Activated CD4-positive, alpha-beta memory T cell treated with anti-CD3 and anti-CD28 coated beads, Interleukin-2, amount 10 ng/mL, durations not matched to agents 7 days and 5 days (primary cell): ENCODE measurements at regions of chr20 and their contacts with region 1.

Region 1: GRCh38 chr20:2651772-2652723 is at the start of gene NOP56:
- DNase-seq: peak; percentile 94
- H3K4me3 Mint-ChIP-seq: peak within 1 kb of the TSS; percentile 84
- H3K27ac Mint-ChIP-seq: peak within 1 kb of the TSS; percentile 87
- H3K4me1 Mint-ChIP-seq: peaks cover 50% of the 10 kb centered on the region
- H3K27me3 Mint-ChIP-seq: no peaks in the 10 kb centered on the region
- total RNA-seq, gene NOP56: 285 to 302 TPM

Region 2: DNA sequence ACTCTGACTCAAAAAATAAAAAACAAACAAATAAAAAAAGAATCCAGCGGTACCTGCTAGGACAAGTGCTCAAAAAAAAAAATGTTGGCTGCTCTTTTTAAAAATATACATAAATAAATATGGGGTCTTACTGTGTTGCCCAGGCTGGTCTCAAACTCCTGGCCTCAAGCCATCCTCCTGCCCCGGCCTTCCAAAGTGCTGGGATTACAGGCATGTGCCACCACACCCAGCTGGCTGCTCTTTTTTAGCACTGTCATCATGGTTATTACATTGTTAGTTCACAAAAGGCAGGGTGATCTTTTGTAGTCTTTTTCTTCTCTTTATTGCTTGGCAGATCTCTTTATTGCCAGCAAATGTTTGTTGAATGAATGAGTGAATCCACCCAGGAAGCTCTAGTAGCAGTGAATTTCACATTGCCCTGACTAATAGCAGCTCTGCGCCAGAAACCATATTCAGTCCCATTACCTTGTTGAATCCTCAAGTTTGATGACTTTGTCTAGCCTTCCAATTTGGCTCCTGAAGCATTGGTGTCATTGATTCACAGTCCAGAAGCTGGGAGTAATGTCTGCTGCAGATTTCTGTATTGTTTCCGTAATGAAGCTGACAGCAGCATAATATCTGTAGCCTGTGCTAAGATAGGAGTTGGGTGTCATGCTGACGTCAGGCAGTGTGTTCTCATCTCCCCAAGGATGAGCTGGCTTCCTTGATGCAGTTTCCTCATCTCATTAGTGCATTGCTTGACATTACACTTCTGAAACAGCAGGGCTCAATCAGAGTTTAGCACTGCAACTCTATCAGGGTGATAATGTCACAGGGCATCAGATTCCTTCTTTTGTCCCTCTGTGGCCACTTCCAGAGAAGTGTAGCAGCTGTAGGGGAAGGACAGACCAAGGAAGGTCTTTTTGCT is 441.1 kb before region 1 on chr20:
- CTCF ChIA-PET with region 1: no interaction called
- POLR2A ChIA-PET with region 1: no interaction called
- DNase-seq: no peak
- H3K4me3 Mint-ChIP-seq: no peak overlapping the region
- H3K27ac Mint-ChIP-seq: no peak overlapping the region
- H3K4me1 Mint-ChIP-seq: peaks cover 1% of the 10 kb centered on the region
- H3K27me3 Mint-ChIP-seq: peaks cover 21% of the 10 kb centered on the region

Region 3: DNA sequence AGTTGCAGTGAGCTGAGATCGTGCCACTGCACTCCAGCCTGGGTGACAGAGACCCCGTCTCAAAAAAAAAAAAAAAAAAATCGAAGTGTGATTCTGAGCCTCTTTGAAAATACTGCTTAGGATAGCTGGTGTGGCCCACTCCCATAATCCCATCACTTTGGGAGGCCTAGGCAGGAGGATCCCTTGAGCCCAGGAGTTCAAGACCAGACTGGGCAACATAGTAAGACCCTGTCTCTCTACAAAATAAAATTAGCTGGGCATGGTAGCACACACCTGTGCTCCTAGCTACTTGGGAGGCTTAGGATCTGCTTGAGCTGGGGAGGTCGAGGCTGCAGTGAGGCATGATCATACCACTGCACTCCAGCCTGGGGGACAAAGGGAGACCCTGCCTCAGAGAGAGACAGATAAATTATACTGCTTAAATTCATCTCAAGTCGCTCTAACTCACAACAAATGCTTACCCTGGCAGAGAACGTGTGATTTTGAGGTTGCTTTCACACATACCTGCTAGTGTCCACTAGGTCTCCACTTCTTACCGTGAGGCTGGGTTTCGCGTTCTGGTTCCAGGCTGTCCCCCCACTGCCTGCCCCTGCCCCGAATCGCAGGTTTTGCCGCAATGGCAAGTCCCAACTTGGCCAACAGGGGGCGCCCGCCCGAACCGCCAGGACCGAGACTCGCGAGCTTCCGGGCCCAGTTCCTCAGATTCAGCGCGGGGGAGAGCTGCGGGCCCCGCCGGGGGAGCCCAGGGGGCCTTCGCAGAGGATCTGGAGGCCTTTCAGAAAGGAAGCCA is 127.9 kb before region 1 on chr20:
- CTCF ChIA-PET with region 1: interaction called, 15 read pairs
- POLR2A ChIA-PET with region 1: interaction called, 20 read pairs
- DNase-seq: peak; percentile 91
- H3K4me3 Mint-ChIP-seq: peak overlapping the region; percentile 88
- H3K27ac Mint-ChIP-seq: peak overlapping the region; percentile 71
- H3K4me1 Mint-ChIP-seq: peaks cover 33% of the 10 kb centered on the region
- H3K27me3 Mint-ChIP-seq: peaks cover 3% of the 10 kb centered on the region

Region 4: GRCh38 chr20:2663887-2664719 is 12.1 kb after region 1 on chr20 and contains the start of gene IDH3B:
- CTCF ChIA-PET with region 1: interaction called, 18 read pairs
- POLR2A ChIA-PET with region 1: interaction called, 199 read pairs
- DNase-seq: peak; percentile 95
- H3K4me3 Mint-ChIP-seq: peak within 1 kb of the TSS; percentile 84
- H3K27ac Mint-ChIP-seq: peak within 1 kb of the TSS; percentile 95
- H3K4me1 Mint-ChIP-seq: peaks cover 34% of the 10 kb centered on the region
- H3K27me3 Mint-ChIP-seq: peaks cover 8% of the 10 kb centered on the region
- total RNA-seq, gene IDH3B: 78.8 to 82.2 TPM

Region 5: GRCh38 chr20:2742934-2743559 is 91.0 kb after region 1 on chr20:
- CTCF ChIA-PET with region 1: no interaction called
- POLR2A ChIA-PET with region 1: interaction called, 15 read pairs
- DNase-seq: peak; percentile 71
- H3K4me3 Mint-ChIP-seq: no peak overlapping the region
- H3K27ac Mint-ChIP-seq: no peak overlapping the region
- H3K4me1 Mint-ChIP-seq: peaks cover 33% of the 10 kb centered on the region
- H3K27me3 Mint-ChIP-seq: peaks cover 20% of the 10 kb centered on the region

Region 6: GRCh38 chr20:2780948-2781347 is 128.9 kb after region 1 on chr20:
- CTCF ChIA-PET with region 1: no interaction called
- POLR2A ChIA-PET with region 1: no interaction called
- DNase-seq: no peak
- H3K4me3 Mint-ChIP-seq: no peak overlapping the region
- H3K27ac Mint-ChIP-seq: no peak overlapping the region
- H3K4me1 Mint-ChIP-seq: no peaks in the 10 kb centered on the region
- H3K27me3 Mint-ChIP-seq: peaks cover 26% of the 10 kb centered on the region

Region 7: GRCh38 chr20:2814587-2815051 is 162.6 kb after region 1 on chr20 and contains the start of gene C20orf141:
- CTCF ChIA-PET with region 1: no interaction called
- POLR2A ChIA-PET with region 1: no interaction called
- DNase-seq: no peak
- H3K4me3 Mint-ChIP-seq: no peak within 1 kb of the TSS
- H3K27ac Mint-ChIP-seq: no peak within 1 kb of the TSS
- H3K4me1 Mint-ChIP-seq: peaks cover 2% of the 10 kb centered on the region
- H3K27me3 Mint-ChIP-seq: peaks cover 37% of the 10 kb centered on the region
- total RNA-seq, gene C20orf141: not detected

Region 8: DNA sequence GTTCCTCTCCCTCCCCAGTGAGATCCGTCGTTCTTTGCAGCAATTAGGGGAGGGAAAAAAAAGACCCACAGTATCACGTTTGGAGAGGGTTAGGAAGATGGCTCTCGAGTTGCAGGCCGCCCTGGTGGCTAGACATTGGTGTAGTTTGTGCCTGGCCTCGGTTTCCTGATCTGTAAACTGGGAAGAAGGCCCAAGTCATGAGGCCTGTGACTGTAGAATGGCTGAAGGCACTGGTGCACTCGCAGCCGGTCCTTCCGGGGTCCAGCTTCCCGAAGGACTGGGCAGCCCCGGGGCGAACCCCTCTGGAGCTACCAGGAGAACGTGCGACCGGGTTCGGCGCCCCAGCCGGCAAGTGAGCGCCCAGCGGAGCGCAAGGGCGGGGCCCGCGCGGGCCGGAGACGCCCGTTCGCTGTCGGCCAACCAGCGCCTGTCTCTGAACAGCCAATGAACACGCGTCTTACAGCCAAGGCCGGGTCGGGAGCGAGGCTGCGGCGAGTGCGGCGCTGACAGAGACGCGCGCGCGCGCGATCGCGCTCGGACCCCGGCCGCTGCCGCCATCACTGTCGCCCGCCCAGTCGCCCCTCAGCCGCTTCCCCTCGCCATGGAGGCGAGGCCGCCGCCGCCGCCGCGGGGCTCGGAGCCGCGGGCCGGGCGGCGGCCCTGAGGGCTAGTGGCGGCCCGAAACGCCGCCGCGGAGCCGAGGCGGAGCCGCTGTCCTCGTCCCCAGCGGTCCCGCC is 221.1 kb after region 1 on chr20 and contains the start of gene PTPRA:
- CTCF ChIA-PET with region 1: no interaction called
- POLR2A ChIA-PET with region 1: interaction called, 10 read pairs
- DNase-seq: peak; percentile 94
- H3K4me3 Mint-ChIP-seq: peak within 1 kb of the TSS; percentile 87
- H3K27ac Mint-ChIP-seq: peak within 1 kb of the TSS; percentile 87
- H3K4me1 Mint-ChIP-seq: peaks cover 48% of the 10 kb centered on the region
- H3K27me3 Mint-ChIP-seq: no peaks in the 10 kb centered on the region
- total RNA-seq, gene PTPRA: 66.9 to 71.5 TPM